Vagina (tissue), 2 donors: ENCODE measurements at regions of chr4 and their contacts with region 1.

Region 1: DNA sequence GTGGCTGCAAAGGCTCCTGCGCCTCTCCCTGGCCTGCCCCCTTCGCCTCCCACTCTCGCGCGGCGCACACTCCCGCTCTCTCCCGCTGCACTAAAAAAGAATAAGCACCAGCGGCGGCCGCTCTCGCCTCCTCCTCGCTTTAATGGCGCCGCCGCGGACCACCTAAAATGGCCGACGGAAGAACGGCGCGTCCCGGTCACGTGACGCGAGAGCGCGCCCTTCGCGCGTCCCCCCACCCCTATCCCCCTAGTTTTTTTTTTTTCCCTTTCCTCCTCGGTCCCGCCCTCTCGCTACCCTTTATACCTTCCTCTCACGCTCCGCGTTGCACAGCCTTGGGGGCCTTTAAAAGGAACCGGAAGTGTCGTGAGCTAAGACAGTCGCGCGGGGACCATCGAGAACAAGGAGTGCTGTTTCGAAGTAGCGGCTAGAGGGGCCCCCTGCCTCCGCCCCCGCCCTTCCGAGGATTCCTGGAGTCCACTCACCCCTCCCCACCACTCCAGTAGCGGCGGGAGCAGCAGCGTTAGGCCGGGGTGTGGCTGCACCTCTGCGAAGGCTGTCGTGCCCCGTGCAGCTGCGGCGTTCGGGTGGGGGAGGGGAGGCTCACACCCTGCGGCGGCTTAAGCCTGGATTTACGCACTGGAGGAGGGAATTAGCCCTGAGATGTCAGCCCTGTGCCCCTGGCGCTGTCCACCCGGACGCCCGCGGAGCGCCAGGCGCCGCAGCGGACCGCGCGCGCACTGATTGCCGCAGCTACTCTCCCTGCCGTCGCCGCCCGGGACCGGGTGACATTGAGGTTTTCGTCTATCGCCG is at the start of gene HNRNPD:
- DNase-seq: peak in 1 of 2 donors; percentile 99
- H3K4me3 ChIP-seq: peak within 1 kb of the TSS; percentile 89 to 99
- H3K27ac ChIP-seq: peak within 1 kb of the TSS; percentile 99
- H3K4me1 ChIP-seq: peaks cover 54% of the 10 kb centered on the region
- H3K27me3 ChIP-seq: no peaks in the 10 kb centered on the region
- CTCF ChIP-seq: peak in 1 of 3 experiments; percentile 16
- POLR2A ChIP-seq: peak in 1 of 2 donors; percentile 86
- total RNA-seq, gene HNRNPD: 91.8 TPM

Region 2: DNA sequence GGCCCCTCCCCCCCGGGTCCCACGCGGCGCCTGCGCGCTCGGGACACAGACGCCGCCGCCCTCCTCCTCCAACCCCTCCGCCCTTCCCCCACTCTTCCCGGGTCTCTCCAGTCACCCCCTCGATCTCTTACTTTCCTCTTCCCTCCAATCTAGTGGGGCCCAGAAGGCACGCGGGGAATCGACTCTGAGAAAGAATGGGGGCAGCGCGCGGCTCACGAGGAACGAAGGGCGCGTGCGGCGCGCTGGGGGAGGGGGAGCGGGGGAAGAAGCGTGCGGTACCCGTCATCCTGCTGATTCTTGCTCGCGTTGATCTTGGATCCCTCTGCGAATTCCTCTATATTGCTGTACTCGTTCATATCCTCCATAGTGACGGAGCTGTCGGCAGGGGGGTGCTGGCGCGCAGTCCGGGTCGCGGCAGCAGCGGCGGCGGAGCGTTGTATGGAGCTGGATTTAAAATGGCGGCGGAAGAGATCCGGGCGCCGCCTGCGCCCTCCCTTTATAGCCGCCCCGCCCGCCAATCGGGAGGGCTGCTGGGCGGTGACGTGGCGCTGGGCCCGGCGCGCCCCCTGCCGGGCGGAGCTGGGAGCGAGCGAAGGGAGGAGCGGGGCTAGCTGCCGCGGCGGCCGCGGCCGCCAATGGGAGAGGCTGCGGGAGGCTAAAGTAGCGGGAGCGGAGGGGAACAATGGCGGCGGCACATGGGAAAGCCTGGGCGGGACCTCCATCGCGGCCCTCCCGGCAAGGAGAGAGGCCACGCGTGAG is 55.1 kb after region 1 on chr4:
- intact Hi-C with region 1: loop called (anchors 1 kb)
- DNase-seq: peak in 1 of 2 donors; percentile 92
- H3K4me3 ChIP-seq: peak overlapping the region; percentile 57 to 67
- H3K27ac ChIP-seq: peak overlapping the region; percentile 99
- H3K4me1 ChIP-seq: peaks cover 50% of the 10 kb centered on the region
- H3K27me3 ChIP-seq: no peaks in the 10 kb centered on the region
- CTCF ChIP-seq: peak; percentile 57 to 85 (median 79)
- POLR2A ChIP-seq: peak in 1 of 2 donors; percentile 63